ENCODE measurements at regions of chrX and their contacts with region 1.

Region 1: GRCh38 chrX:110146521-110146920 is 143.6 kb downstream of the TMEM164 start:
- DNase-seq: peak in 2 of 6 donors; percentile 9 to 37
- ATAC-seq: peak; percentile 73 to 91 (median 85)
- H3K4me3 ChIP-seq: no peak overlapping the region
- H3K27ac ChIP-seq: no peak overlapping the region
- H3K4me1 ChIP-seq: no peaks in the 10 kb centered on the region
- H3K27me3 ChIP-seq: no peaks in the 10 kb centered on the region
- CTCF ChIP-seq: peak; percentile 27 to 69 (median 52)

Region 2: DNA sequence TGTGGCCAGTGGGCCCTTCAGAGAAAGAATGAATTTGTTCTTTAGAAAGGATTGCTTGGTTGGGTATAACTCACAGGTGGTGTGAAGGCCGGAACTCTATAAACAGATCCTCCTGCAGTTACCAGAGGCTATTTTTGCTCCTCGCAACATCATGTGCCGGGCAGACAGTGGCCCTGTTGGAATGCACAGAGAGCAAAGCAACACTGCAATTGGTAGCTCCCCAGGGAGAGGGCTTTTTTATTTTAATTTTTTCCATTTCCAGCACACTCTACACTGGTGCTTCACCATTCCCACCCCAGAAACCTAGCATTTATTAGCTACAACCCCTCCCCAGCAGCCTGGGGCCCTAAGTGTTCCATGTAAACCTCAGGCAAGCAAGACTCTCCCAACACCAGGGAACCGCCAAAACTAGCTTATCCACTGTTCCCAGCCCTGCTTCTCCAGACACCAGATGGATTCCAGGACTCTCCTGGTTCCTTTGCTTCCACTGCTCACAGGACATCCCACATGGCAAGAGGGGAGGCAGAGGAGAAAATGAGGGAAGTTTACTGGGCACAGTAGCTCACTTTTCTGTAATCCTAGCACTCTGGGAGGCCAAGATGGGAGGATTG is 218.8 kb before region 1 on chrX:
- intact Hi-C with region 1: loop called in 2 of 3 experiments (anchors 10 kb)
- DNase-seq: no peak
- ATAC-seq: no peak
- H3K4me3 ChIP-seq: no peak overlapping the region
- H3K27ac ChIP-seq: no peak overlapping the region
- H3K4me1 ChIP-seq: no peaks in the 10 kb centered on the region
- H3K27me3 ChIP-seq: peaks cover 0 to 5% (median 0%) of the 10 kb centered on the region in 4 donors
- CTCF ChIP-seq: no peak

Region 3: DNA sequence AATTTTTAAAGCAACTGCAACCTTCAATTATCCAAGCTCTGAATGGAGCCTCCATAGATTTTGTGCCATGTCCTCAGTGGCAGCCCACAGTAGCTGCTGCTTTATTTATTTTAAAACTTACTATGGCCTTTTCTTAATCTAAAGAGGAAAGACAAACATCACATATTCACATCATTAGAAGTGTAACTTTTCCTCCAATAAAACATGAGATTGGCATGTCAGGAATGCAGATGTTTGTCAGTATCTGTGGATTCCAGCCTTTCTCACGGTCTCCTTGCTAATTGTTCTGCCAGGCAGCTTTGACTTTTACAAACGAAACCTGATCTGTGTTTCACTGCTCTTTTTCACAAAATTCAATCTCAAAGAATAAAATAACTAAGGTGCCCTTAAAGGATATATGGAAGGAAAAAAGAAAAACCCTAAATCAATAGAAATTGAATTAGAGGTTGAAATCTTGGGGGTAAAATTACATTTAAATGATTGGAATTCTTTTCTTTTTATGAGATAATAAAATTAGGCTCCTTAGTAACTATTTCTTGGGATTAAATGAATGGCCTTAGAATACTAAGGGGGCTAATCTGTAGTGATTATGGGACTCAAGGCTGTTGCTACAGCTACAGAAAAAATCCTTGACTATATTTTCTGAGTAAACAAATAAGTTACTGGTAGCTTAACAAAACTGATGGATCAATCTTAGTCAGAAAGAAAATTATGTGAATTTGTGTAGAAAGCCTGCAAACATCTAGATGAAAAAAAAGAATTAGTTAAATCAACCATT is 363.4 kb after region 1 on chrX:
- intact Hi-C with region 1: no loop called
- DNase-seq: no peak
- ATAC-seq: no peak
- H3K4me3 ChIP-seq: no peak overlapping the region
- H3K27ac ChIP-seq: no peak overlapping the region
- H3K4me1 ChIP-seq: no peaks in the 10 kb centered on the region
- H3K27me3 ChIP-seq: no peaks in the 10 kb centered on the region
- CTCF ChIP-seq: no peak

Region 4: GRCh38 chrX:110536816-110537215 is 390.3 kb after region 1 on chrX:
- intact Hi-C with region 1: no loop called
- DNase-seq: no peak
- ATAC-seq: no peak
- H3K4me3 ChIP-seq: no peak overlapping the region
- H3K27ac ChIP-seq: no peak overlapping the region
- H3K4me1 ChIP-seq: no peaks in the 10 kb centered on the region
- H3K27me3 ChIP-seq: peaks cover 0 to 5% (median 0%) of the 10 kb centered on the region in 4 donors
- CTCF ChIP-seq: no peak

Measured in pancreas (tissue), 10 donors.